ENCODE measurements at regions of chr5 and their contacts with region 1.

Region 1: GRCh38 chr5:100697970-100698369 is 162.8 kb downstream of the FAM174A start:
- DNase-seq: no peak
- ATAC-seq: peak; percentile 50
- H3K4me3 Mint-ChIP-seq: no peak overlapping the region
- H3K27ac Mint-ChIP-seq: no peak overlapping the region
- H3K4me1 Mint-ChIP-seq: peaks cover 7% of the 10 kb centered on the region
- H3K27me3 Mint-ChIP-seq: no peaks in the 10 kb centered on the region
- CTCF ChIP-seq: 0 out of 2 replicates have a peak, but pooled peaks have one; percentile 17

Region 2: GRCh38 chr5:100623719-100624118 is 74.3 kb before region 1 on chr5:
- CTCF ChIA-PET with region 1: no interaction called
- POLR2A ChIA-PET with region 1: no interaction called
- DNase-seq: no peak
- ATAC-seq: no peak
- H3K4me3 Mint-ChIP-seq: no peak overlapping the region
- H3K27ac Mint-ChIP-seq: no peak overlapping the region
- H3K4me1 Mint-ChIP-seq: peaks cover 6% of the 10 kb centered on the region
- H3K27me3 Mint-ChIP-seq: no peaks in the 10 kb centered on the region
- CTCF ChIP-seq: no peak

Region 3: GRCh38 chr5:100708692-100709091 is 10.7 kb after region 1 on chr5:
- CTCF ChIA-PET with region 1: interaction called, 11 read pairs
- POLR2A ChIA-PET with region 1: no interaction called
- DNase-seq: no peak
- ATAC-seq: no peak; the same call in 1 of the 2 replicates
- H3K4me3 Mint-ChIP-seq: no peak overlapping the region
- H3K27ac Mint-ChIP-seq: no peak overlapping the region
- H3K4me1 Mint-ChIP-seq: peaks cover 12% of the 10 kb centered on the region
- H3K27me3 Mint-ChIP-seq: no peaks in the 10 kb centered on the region
- CTCF ChIP-seq: no peak

Region 4: GRCh38 chr5:100840384-100840783 is 142.4 kb after region 1 on chr5:
- CTCF ChIA-PET with region 1: no interaction called
- POLR2A ChIA-PET with region 1: no interaction called
- DNase-seq: no peak
- ATAC-seq: peak; percentile 32
- H3K4me3 Mint-ChIP-seq: no peak overlapping the region
- H3K27ac Mint-ChIP-seq: no peak overlapping the region
- H3K4me1 Mint-ChIP-seq: peaks cover 36% of the 10 kb centered on the region
- H3K27me3 Mint-ChIP-seq: no peaks in the 10 kb centered on the region
- CTCF ChIP-seq: no peak

Measured in WTC11 (cell line).